Activated naive CD4-positive, alpha-beta T cell treated with anti-CD3 and anti-CD28 coated beads, Interleukin-2, amount 10 ng/mL, durations not matched to agents 7 days and 5 days (primary cell): ENCODE measurements at regions of chr17 and their contacts with region 1.

Region 1: DNA sequence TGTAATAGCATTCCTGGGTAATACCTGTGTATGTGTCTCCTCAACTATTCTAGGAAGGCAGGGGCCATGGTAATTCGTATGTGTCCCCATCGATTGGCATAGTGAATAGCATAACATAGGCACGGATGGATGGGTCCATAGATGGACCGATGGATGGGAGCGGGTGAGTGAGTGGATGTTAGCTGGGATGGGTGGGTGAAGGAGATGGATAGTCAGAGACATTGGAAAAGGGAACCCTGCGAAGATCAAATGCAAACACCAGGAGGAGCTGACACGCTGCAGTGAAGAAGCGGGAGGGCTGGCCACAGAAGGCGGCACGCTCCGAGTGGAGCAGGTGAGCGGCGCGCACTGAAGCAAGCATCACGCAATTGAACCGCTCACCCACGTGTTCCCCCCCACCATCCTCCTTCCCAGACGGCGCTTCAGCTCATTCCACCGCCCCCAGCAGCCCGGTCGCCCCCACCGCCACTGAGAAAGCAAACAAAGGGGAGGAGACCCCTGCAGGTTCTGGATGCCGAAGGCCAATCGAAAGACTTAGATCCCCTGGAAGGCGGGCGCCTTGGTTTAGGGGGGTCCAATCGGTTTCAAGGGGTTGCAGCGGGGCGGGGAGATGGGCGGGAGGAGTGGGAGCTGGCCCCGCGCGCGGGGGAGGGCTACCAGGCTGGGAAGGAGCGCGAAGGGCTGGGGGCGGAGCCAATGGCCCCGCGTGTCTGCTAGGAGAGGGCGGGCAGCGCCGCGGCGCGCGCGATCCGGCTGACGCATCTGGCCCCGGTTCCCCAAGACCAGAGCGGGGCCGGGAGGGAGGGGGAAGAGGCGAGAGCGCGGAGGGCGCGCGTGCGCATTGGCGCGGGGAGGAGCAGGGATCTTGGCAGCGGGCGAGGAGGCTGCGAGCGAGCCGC is at the start of gene ARRB2:
- DNase-seq: peak; percentile 99
- H3K4me3 Mint-ChIP-seq: peak within 1 kb of the TSS; percentile 98
- H3K27ac Mint-ChIP-seq: peak within 1 kb of the TSS; percentile 99
- H3K4me1 Mint-ChIP-seq: peaks cover 62% of the 10 kb centered on the region
- H3K27me3 Mint-ChIP-seq: no peaks in the 10 kb centered on the region

Region 2: GRCh38 chr17:4625181-4625617 is 84.8 kb before region 1 on chr17:
- CTCF ChIA-PET with region 1: no interaction called
- DNase-seq: no peak
- H3K4me3 Mint-ChIP-seq: no peak overlapping the region
- H3K27ac Mint-ChIP-seq: no peak overlapping the region
- H3K4me1 Mint-ChIP-seq: no peaks in the 10 kb centered on the region
- H3K27me3 Mint-ChIP-seq: peaks cover 31% of the 10 kb centered on the region

Region 3: GRCh38 chr17:4789901-4790704 is 80.1 kb after region 1 on chr17:
- CTCF ChIA-PET with region 1: interaction called, 28 read pairs
- DNase-seq: peak; percentile 85
- H3K4me3 Mint-ChIP-seq: peak overlapping the region; percentile 84
- H3K27ac Mint-ChIP-seq: peak overlapping the region; percentile 92
- H3K4me1 Mint-ChIP-seq: peaks cover 37% of the 10 kb centered on the region
- H3K27me3 Mint-ChIP-seq: peaks cover 61% of the 10 kb centered on the region

Region 4: GRCh38 chr17:4881761-4882555 is 171.9 kb after region 1 on chr17:
- CTCF ChIA-PET with region 1: interaction called, 11 read pairs
- DNase-seq: peak; percentile 78
- H3K4me3 Mint-ChIP-seq: no peak overlapping the region
- H3K27ac Mint-ChIP-seq: no peak overlapping the region
- H3K4me1 Mint-ChIP-seq: no peaks in the 10 kb centered on the region
- H3K27me3 Mint-ChIP-seq: no peaks in the 10 kb centered on the region